MCF 10A (cell line): ENCODE measurements at regions of chrX and their contacts with region 1.

Region 1: DNA sequence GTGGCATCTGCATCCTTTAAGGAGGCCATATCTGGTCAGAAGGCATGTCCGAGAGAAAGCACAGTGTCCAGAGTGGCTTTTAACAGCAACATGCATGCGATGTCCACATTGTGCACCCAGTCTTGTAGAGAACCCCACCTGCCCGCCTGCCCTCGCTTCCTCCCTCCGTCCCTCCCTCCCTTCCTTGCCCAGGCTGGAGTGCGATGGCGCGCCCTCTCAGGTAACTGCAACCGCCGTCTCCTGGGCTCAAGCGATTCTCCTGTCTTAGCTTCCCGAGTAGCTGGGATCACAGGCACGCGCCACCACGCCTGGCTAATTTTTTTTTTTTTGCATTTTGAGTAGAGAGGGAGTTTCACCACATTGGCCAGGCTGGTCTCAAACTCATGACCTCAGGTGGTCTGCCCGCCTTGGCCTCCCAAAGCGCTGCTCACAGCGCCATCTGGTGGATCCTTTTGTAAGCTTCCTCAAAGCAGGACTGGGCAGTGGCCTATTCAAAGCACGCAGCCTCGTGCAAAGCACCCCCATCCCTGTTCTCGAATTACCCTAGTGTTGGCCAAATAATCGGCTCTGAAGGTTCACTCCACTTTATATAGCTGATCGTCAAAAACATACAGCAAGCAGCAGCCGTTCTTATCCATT is 15.0 kb downstream of the BRCC3 start:
- DNase-seq: peak; percentile 62
- H3K4me3 Mint-ChIP-seq: no peak overlapping the region
- H3K27ac Mint-ChIP-seq: no peak overlapping the region
- H3K4me1 Mint-ChIP-seq: no peaks in the 10 kb centered on the region
- H3K27me3 Mint-ChIP-seq: peaks cover 40% of the 10 kb centered on the region
- CTCF ChIP-seq: peak; percentile 61

Region 2: GRCh38 chrX:154775419-154776349 is 310.6 kb before region 1 on chrX:
- CTCF ChIA-PET with region 1: no interaction called
- POLR2A ChIA-PET with region 1: no interaction called
- intact Hi-C with region 1: no loop called
- DNase-seq: peak; percentile 69
- H3K4me3 Mint-ChIP-seq: no peak overlapping the region
- H3K27ac Mint-ChIP-seq: no peak overlapping the region
- H3K4me1 Mint-ChIP-seq: no peaks in the 10 kb centered on the region
- H3K27me3 Mint-ChIP-seq: peaks cover 11% of the 10 kb centered on the region
- CTCF ChIP-seq: no peak

Region 3: GRCh38 chrX:155070975-155071693 is 15.2 kb before region 1 on chrX and contains the starts of genes BRCC3, CMC4 and MTCP1:
- CTCF ChIA-PET with region 1: interaction called, 25 read pairs
- POLR2A ChIA-PET with region 1: interaction called, 4 read pairs
- intact Hi-C with region 1: no loop called
- DNase-seq: peak; percentile 75
- H3K4me3 Mint-ChIP-seq: peak within 1 kb of the TSS; percentile 83
- H3K27ac Mint-ChIP-seq: peak within 1 kb of the TSS; percentile 65
- H3K4me1 Mint-ChIP-seq: peaks cover 30% of the 10 kb centered on the region
- H3K27me3 Mint-ChIP-seq: peaks cover 31% of the 10 kb centered on the region
- CTCF ChIP-seq: no peak
- total RNA-seq, gene BRCC3: 21.1 and 22.9 TPM in 2 replicates
- total RNA-seq, gene CMC4: 8.0 and 10.1 TPM in 2 replicates
- total RNA-seq, gene MTCP1: 21.3 and 32.2 TPM in 2 replicates